Naive thymus-derived CD8-positive, alpha-beta T cell (primary cell): ENCODE measurements at regions of chr17 and their contacts with region 1.

Region 1: DNA sequence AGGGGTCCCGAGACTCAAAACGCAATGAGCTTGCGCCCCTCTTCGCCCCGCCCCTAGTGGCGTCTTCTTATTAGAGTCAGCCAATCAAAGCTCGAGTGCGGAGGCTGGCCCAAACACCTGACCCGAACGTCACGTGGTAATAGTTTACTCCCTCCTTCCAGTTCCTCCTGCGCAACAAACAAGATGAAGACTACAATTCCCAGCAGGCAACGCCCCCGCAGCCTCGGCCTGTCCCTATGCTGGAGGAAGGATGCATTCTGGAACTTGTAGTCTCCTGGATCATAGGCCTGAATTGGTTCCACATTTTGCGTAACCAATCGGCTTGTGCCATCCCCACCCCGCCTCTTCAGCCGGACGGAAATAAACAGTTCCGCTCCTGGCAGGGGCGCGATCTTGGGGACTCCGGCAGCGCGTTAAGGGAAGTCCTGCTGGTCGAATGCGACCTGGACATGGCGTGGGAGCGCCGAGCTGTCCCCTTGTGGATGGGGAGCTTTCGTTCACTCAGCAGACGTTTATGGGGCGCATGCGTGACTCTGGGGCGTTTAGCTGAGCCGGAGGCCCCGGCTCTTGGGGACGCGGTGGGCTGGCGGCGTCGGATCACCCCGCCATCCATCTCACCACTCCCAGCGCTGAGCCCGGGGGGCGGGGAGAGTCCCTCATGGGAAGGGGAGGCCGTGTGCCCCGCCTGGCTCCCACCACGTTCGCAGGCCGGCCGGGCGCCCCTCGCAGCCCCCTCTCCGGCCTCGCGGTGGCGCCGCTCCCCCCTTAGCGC is at the start of gene WBP2:
- DNase-seq: peak; percentile 90 to 99 (median 98)
- ATAC-seq: peak; percentile 87 to 91
- H3K4me3 Mint-ChIP-seq: peak within 1 kb of the TSS in 2 of 10 donors; percentile 90 to 95
- H3K27ac Mint-ChIP-seq: peak within 1 kb of the TSS in 6 of 10 donors; percentile 90 to 97 (median 92)
- H3K4me1 Mint-ChIP-seq: peaks cover 6 to 44% (median 28%) of the 10 kb centered on the region in 4 donors
- H3K27me3 Mint-ChIP-seq: no peaks in the 10 kb centered on the region
- polyA plus RNA-seq, gene WBP2: 58.1 to 95.1 (median 70.6) TPM

Region 2: DNA sequence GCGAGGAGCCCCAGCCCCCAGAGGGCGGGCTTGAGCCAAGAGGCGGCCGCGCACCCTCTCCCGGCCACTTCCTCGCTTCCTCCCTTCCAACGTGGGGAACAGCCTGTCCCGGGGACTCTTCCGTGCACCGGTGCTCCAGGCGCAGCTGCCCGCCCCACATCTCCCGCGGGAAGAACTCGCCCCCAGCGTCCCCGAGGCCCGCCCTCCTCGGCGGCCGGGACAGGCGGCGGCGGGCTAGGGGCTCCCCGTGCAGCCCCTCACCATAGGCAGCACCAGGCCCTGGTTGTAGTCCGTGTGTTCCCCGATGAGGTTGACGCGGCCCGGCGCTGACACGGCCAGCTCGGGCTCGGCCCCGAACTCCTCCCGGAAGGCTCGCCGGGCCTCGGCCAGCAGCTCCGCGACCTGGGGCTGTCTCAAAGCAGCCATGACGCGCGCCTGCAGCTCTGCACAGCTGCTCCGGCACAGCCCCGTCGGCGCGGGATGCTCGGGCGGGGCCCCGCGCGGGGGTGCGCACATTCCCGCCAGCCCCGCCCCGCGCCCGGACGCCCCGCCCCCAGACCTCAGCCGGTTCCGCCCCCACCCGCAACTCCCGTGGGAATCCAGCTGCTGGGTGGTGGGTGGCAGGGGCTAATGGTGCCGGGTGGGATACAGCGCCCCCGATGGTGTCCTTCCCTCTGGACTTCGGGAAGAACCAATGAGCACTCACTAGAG is 90.6 kb before region 1 on chr17 and contains the start of gene GALK1:
- POLR2A ChIA-PET with region 1: interaction called, 20 read pairs
- DNase-seq: peak; percentile 50 to 83 (median 68)
- ATAC-seq: peak; percentile 92 to 93
- H3K4me3 Mint-ChIP-seq: peak within 1 kb of the TSS; percentile 68 to 84 (median 75)
- H3K27ac Mint-ChIP-seq: peak within 1 kb of the TSS in 9 of 10 donors; percentile 31 to 84 (median 60)
- H3K4me1 Mint-ChIP-seq: peaks cover 1 to 23% (median 16%) of the 10 kb centered on the region in 4 donors
- H3K27me3 Mint-ChIP-seq: no peaks in the 10 kb centered on the region
- polyA plus RNA-seq, gene GALK1: 9.5 to 14.4 (median 13.9) TPM

Region 3: DNA sequence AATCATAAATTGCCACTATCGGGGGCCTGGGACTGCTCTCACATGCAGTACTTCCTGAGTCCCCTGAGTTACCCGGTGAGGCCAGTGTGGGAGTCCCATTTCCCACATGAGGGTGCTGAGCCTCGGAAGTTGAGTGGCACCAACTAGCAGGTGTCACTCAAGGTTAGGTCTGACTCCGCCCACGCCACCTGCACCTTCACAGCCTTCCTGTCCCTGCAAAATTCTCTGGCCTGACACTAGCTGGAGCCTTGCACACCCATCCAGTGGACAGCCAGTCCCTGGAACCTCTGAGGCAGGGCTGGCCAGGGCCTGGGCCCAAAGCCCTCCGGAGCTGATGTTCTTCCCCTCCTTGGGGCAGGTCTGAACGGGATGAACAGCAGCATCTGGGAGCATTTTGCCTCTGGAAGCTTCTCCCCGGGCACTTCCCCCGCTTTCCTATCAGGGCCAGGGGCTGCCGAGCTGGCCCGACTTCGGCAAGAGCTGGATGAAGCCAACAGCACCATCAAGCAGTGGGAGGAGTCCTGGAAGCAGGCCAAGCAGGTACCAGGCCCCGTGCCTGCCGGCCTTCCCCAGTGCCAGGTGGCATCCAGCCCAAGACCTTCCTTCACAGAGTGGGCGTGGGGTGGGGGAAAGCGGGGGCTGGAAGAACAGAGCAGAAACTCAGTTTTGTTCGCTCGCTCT is 33.2 kb before region 1 on chr17:
- POLR2A ChIA-PET with region 1: interaction called, 11 read pairs
- DNase-seq: peak in 8 of 10 donors; percentile 20 to 80 (median 43)
- ATAC-seq: peak; percentile 78 to 95
- H3K4me3 Mint-ChIP-seq: peak overlapping the region in 8 of 10 donors; percentile 14 to 77 (median 54)
- H3K27ac Mint-ChIP-seq: peak overlapping the region; percentile 81 to 93 (median 90)
- H3K4me1 Mint-ChIP-seq: peaks cover 11 to 31% (median 20%) of the 10 kb centered on the region in 4 donors
- H3K27me3 Mint-ChIP-seq: no peaks in the 10 kb centered on the region

Region 4: DNA sequence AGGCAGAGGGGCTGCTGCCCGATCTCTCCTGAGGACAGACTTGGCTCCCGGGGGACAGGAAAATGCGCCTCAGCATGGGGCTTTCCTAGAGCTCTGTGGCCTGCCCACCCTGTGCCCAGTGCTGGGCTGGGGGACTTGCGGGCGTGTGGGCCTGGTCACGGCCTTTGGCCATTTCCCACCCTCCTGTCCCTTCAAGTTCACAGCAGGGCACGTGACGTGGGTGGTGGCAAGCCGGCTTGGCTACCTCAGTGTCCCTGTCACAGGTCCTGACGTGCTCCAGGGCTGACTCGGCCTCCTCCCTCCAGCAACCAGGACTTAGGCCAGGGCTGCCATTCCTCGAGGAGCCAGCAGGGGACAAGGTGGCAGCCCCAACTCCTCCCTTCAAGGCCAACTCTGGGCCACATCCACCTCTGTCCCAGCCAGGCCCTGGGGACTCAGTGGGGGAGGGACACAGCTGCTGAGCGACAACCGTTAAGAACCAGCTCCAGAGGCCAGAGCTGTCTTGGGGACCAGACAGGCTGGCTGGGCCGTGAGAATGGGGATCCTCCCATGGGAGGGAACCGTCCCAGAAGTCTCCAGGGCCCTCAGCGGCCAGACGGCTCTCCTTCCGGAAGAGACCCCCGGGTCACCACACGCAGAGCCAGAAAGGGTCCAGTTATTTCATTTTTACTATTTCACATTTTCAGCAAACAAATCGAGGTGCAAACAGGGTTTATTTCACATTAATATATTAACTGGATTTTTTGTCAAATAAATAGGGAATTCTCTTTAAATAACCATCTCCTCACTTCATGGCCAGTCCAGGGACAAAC is 10.2 kb before region 1 on chr17:
- POLR2A ChIA-PET with region 1: interaction called, 114 read pairs
- DNase-seq: peak in 7 of 10 donors; percentile 40 to 77 (median 51)
- ATAC-seq: peak; percentile 42 to 43
- H3K4me3 Mint-ChIP-seq: peak overlapping the region in 9 of 10 donors; percentile 22 to 63 (median 45)
- H3K27ac Mint-ChIP-seq: peak overlapping the region; percentile 47 to 92 (median 80)
- H3K4me1 Mint-ChIP-seq: peaks cover 9 to 36% (median 28%) of the 10 kb centered on the region in 4 donors
- H3K27me3 Mint-ChIP-seq: no peaks in the 10 kb centered on the region

Region 5: DNA sequence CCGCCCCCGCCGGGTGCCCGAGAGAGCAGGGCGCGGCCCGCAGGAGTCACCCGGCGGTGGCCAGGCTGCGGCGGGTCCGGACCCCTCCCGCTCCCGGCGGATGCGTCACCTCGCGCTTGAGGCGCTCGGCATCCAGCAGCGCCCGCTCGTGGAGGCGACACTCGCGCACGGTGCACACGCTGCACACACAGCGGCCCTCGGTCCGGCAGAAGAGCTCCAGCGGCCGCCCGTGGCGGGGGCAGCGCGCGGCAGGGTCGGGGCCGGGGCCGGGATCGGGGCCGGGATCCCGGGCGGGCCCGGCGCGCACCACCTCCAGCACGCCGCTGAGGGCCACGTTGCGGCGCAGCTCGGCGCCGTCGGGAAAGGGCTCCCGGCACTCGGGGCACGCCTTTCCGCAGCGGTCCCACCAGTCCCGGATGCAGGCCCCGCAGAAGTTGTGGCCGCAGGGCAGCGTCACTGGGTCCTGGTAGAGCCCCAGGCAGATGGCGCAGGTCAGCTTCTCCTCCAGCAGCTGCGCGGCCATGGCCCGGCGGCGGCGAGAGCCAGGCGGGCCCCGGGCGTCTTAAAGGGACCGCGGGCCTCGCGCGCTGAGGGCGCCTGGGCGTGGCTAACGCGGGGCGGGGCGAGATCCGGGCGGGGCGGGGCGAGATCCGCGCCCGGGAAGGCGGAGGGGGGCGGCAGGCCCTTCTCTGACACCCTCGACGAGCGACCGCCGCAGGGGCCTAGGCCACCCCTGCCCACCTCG is 41.1 kb after region 1 on chr17 and contains the start of gene TRIM65:
- POLR2A ChIA-PET with region 1: interaction called, 108 read pairs
- DNase-seq: peak; percentile 56 to 84 (median 76)
- ATAC-seq: peak; percentile 84 to 87
- H3K4me3 Mint-ChIP-seq: peak within 1 kb of the TSS; percentile 75 to 87 (median 82)
- H3K27ac Mint-ChIP-seq: peak within 1 kb of the TSS; percentile 77 to 92 (median 86)
- H3K4me1 Mint-ChIP-seq: peaks cover 19 to 28% (median 26%) of the 10 kb centered on the region in 4 donors
- H3K27me3 Mint-ChIP-seq: no peaks in the 10 kb centered on the region
- polyA plus RNA-seq, gene TRIM65: 13.4 to 31.8 (median 18.9) TPM